ENCODE measurements at regions of chr17 and their contacts with region 1.

Region 1: GRCh38 chr17:78781948-78782916 is at the start of gene CYTH1:
- DNase-seq: peak; percentile 91
- ATAC-seq: peak; percentile 68
- H3K4me3 ChIP-seq: peak within 1 kb of the TSS; percentile 70 to 98 (median 93)
- H3K27ac ChIP-seq: peak within 1 kb of the TSS; percentile 89
- H3K4me1 ChIP-seq: peaks cover 62% of the 10 kb centered on the region
- H3K27me3 ChIP-seq: no peaks in the 10 kb centered on the region; a peak in 1 of 5 replicates
- CTCF ChIP-seq: peak; percentile 33
- EP300 ChIP-seq: no peak
- POLR2A ChIP-seq: peak; percentile 74 to 75
- RAD21 ChIP-seq: peak; percentile 53
- total RNA-seq, gene CYTH1: 20.1 and 21.3 TPM in 2 replicates

Region 2: DNA sequence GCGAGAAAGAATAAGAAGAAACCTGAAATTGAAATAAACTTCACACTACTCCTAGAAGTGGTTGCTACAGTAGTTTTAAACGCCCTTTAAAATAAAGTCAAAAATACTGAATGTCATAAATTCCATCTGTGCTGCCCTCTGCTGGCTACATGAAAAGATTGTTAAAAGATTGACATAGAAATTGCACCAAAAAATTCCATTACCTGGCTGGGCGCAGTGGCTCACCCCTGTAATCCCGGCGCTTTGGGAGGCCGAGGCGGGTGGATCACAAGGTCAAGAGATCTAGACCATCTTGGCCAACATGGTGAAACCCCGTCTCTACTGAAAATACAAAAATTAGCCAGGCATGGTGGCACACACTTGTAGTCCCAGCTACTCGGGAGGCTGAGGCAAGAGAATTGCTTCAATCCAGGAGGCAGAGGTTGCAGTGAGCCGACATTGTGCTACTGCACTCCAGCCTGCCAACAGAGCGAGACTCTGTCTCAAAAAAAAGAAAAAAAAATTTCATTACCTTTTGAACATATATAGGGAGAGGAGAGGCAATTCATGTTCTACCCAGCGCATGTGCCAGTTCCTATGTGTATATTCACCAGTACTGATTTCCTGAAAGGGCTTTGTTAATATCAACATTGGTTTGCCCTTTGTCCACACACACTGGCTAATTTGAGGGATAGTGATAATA is 36.7 kb before region 1 on chr17:
- CTCF ChIA-PET with region 1: no interaction called
- POLR2A ChIA-PET with region 1: interaction called, 4 read pairs
- in situ Hi-C with region 1: no loop called
- intact Hi-C with region 1: loop called (anchors 5 kb)
- DNase-seq: peak; percentile 52
- ATAC-seq: no peak
- H3K4me3 ChIP-seq: no peak overlapping the region
- H3K27ac ChIP-seq: peak overlapping the region; percentile 93
- H3K4me1 ChIP-seq: peaks cover 65% of the 10 kb centered on the region
- H3K27me3 ChIP-seq: no peaks in the 10 kb centered on the region
- CTCF ChIP-seq: peak; percentile 66
- EP300 ChIP-seq: no peak
- POLR2A ChIP-seq: no peak
- RAD21 ChIP-seq: peak; percentile 34; the same call in 1 of the 2 replicates